Activated CD4-positive, alpha-beta T cell treated with anti-CD3 and anti-CD28 coated beads, Interleukin-2, amount 10 ng/mL, durations not matched to agents 24 days and 14 days (primary cell): ENCODE measurements at regions of chr12 and their contacts with region 1.

Region 1: GRCh38 chr12:88299567-88300101 is 157.5 kb downstream of the TMTC3 start:
- DNase-seq: peak; percentile 75
- H3K4me3 Mint-ChIP-seq: peak overlapping the region; percentile 52
- H3K27ac Mint-ChIP-seq: peak overlapping the region; percentile 87
- H3K4me1 Mint-ChIP-seq: peaks cover 26% of the 10 kb centered on the region
- H3K27me3 Mint-ChIP-seq: no peaks in the 10 kb centered on the region

Region 2: GRCh38 chr12:88057994-88058718 is 241.5 kb before region 1 on chr12:
- intact Hi-C with region 1: loop called (anchors 5 kb)
- DNase-seq: no peak
- H3K4me3 Mint-ChIP-seq: no peak overlapping the region
- H3K27ac Mint-ChIP-seq: no peak overlapping the region
- H3K4me1 Mint-ChIP-seq: peaks cover 5% of the 10 kb centered on the region
- H3K27me3 Mint-ChIP-seq: no peaks in the 10 kb centered on the region

Region 3: GRCh38 chr12:88235183-88235833 is 64.3 kb before region 1 on chr12:
- intact Hi-C with region 1: loop called (anchors 1 kb)
- DNase-seq: no peak
- H3K4me3 Mint-ChIP-seq: no peak overlapping the region
- H3K27ac Mint-ChIP-seq: peak overlapping the region; percentile 39
- H3K4me1 Mint-ChIP-seq: peaks cover 13% of the 10 kb centered on the region
- H3K27me3 Mint-ChIP-seq: no peaks in the 10 kb centered on the region

Region 4: GRCh38 chr12:88393017-88393767 is 93.6 kb after region 1 on chr12:
- intact Hi-C with region 1: loop called (anchors 1 kb)
- DNase-seq: no peak
- H3K4me3 Mint-ChIP-seq: no peak overlapping the region
- H3K27ac Mint-ChIP-seq: no peak overlapping the region
- H3K4me1 Mint-ChIP-seq: peaks cover 11% of the 10 kb centered on the region
- H3K27me3 Mint-ChIP-seq: peaks cover 2% of the 10 kb centered on the region

Region 5: GRCh38 chr12:89153341-89153740 is 853.7 kb after region 1 on chr12:
- intact Hi-C with region 1: no loop called
- DNase-seq: no peak
- H3K4me3 Mint-ChIP-seq: no peak overlapping the region
- H3K27ac Mint-ChIP-seq: peak overlapping the region; percentile 26
- H3K4me1 Mint-ChIP-seq: peaks cover 27% of the 10 kb centered on the region
- H3K27me3 Mint-ChIP-seq: no peaks in the 10 kb centered on the region

Region 6: GRCh38 chr12:89236748-89237388 is 937.2 kb after region 1 on chr12:
- intact Hi-C with region 1: no loop called
- DNase-seq: no peak
- H3K4me3 Mint-ChIP-seq: peak overlapping the region; percentile 28
- H3K27ac Mint-ChIP-seq: peak overlapping the region; percentile 5
- H3K4me1 Mint-ChIP-seq: peaks cover 70% of the 10 kb centered on the region
- H3K27me3 Mint-ChIP-seq: no peaks in the 10 kb centered on the region